ENCODE measurements at regions of chr9 and their contacts with region 1.

Region 1: GRCh38 chr9:21552244-21553170 is 70.4 kb upstream of the IFNE start:
- DNase-seq: no peak
- ATAC-seq: peak in 1 of 2 experiments; percentile 31; a peak in 3 of 6 replicates
- H3K4me3 ChIP-seq: peak overlapping the region; percentile 79
- H3K27ac ChIP-seq: peak overlapping the region; percentile 83 to 94
- H3K4me1 ChIP-seq: peaks cover 54% of the 10 kb centered on the region
- CTCF ChIP-seq: no peak
- EP300 ChIP-seq: no peak
- POLR2A ChIP-seq: no peak
- RAD21 ChIP-seq: no peak

Region 2: DNA sequence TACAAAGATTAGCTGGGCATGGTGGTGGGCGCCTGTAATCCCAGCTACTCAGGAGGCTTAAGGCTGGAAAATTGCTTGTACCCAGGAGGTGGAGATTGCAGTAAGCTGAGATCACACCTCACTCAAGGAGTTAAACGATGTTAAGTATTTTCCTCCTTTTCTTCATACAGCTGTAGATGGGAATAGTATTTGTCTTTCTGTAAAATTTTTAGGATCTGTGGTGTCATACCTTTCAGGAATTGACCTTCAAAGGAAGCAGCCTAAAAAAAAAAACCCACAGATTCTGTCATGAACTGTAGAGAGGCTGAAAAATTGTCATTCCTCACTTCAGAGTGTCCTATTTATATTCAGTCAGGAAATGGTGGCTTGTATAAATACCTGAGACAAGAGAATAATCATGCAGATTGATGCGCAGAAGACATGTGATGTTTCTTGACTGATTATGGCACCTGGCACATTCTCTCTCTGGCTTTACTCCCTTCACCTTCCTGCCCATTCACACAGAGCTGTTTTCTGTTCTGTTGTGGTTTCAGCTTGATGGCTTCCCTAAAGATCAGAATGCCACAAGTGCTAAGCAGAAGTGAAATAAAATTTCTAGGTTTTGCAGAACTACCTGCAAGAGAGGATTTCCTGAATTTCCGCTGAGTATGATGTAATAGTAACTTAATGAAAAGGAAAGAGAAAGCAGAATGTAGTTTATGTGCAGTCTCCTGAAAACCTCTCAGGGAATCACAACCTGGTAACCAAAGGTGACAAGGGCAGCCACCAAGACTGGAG is 108.5 kb before region 1 on chr9:
- CTCF ChIA-PET with region 1: no interaction called
- POLR2A ChIA-PET with region 1: no interaction called
- DNase-seq: no peak
- ATAC-seq: no peak
- H3K4me3 ChIP-seq: no peak overlapping the region
- H3K27ac ChIP-seq: no peak overlapping the region
- H3K4me1 ChIP-seq: no peaks in the 10 kb centered on the region
- CTCF ChIP-seq: no peak
- EP300 ChIP-seq: no peak
- POLR2A ChIP-seq: no peak
- RAD21 ChIP-seq: no peak

Region 3: DNA sequence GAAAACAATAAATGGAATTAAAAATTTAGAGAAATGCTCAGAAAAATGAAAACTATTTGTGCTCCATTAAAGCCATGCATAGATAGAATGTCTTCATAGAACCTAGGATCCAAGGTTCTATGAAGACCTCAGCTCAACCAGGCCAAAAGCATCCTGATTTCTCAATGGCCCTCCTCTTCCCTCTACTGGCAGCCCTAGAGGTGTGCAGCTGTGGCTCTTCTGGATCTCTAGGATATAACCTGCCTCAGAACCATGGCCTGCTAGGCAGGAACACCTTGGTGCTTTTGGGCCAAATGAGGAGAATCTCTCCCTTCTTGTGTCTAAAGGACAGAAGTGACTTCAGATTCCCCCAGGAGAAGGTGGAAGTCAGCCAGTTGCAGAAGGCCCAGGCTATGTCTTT is 97.2 kb before region 1 on chr9:
- CTCF ChIA-PET with region 1: no interaction called
- POLR2A ChIA-PET with region 1: no interaction called
- DNase-seq: peak; percentile 12 to 48
- ATAC-seq: peak; percentile 88 to 94
- H3K4me3 ChIP-seq: no peak overlapping the region
- H3K27ac ChIP-seq: no peak overlapping the region
- H3K4me1 ChIP-seq: peaks cover 8% of the 10 kb centered on the region; the same call in 1 of the 3 replicates
- CTCF ChIP-seq: peak; percentile 27; the same call in 2 of the 3 replicates
- EP300 ChIP-seq: no peak
- POLR2A ChIP-seq: no peak
- RAD21 ChIP-seq: peak; percentile 25 to 71; a peak in 4 of 5 replicates

Region 4: GRCh38 chr9:21570643-21571275 is 18.3 kb after region 1 on chr9:
- CTCF ChIA-PET with region 1: no interaction called
- POLR2A ChIA-PET with region 1: interaction called, 10 read pairs
- DNase-seq: no peak
- ATAC-seq: peak in 1 of 2 experiments; percentile 61; a peak in 3 of 6 replicates
- H3K4me3 ChIP-seq: peak overlapping the region; percentile 26; the same call in 2 of the 3 replicates
- H3K27ac ChIP-seq: peak overlapping the region; percentile 88 to 94
- H3K4me1 ChIP-seq: peaks cover 100% of the 10 kb centered on the region
- CTCF ChIP-seq: no peak
- EP300 ChIP-seq: no peak
- POLR2A ChIP-seq: no peak
- RAD21 ChIP-seq: no peak

Region 5: DNA sequence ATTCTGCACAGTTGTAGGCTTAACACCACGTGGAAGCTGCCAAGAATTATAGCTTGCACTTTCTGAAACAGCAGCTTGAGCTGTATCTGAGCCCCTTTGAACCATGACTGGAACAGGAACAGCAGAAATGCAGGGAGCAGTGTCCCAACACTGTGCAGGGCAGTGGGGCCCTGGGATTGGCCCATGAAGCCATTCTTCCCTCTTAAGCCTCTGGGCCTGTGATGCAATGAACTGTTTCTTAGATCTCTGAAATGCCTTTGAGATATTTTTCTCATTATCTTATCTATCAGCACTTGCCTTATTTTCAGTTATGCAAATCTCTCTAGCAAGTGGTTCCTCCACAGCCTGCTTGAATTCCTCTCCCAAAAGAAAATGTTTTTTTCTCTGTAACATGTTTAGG is 162.9 kb after region 1 on chr9:
- CTCF ChIA-PET with region 1: no interaction called
- POLR2A ChIA-PET with region 1: no interaction called
- DNase-seq: no peak
- ATAC-seq: no peak
- H3K4me3 ChIP-seq: no peak overlapping the region
- H3K27ac ChIP-seq: no peak overlapping the region
- H3K4me1 ChIP-seq: peaks cover 18% of the 10 kb centered on the region; the same call in 2 of the 3 replicates
- CTCF ChIP-seq: no peak
- EP300 ChIP-seq: no peak
- POLR2A ChIP-seq: no peak
- RAD21 ChIP-seq: no peak

Measured in A549 (cell line).